Endothelial cell of umbilical vein (primary cell): ENCODE measurements at regions of chrX and their contacts with region 1.

Region 1: GRCh38 chrX:103918581-103919269 is 43.7 kb upstream of the TMSB15B start:
- DNase-seq: peak; percentile 76
- H3K4me3 ChIP-seq: peak overlapping the region; percentile 21 to 64 (median 40)
- H3K27ac ChIP-seq: peak overlapping the region; percentile 13
- H3K4me1 ChIP-seq: no peaks in the 10 kb centered on the region
- H3K27me3 ChIP-seq: no peaks in the 10 kb centered on the region
- CTCF ChIP-seq: no peak
- POLR2A ChIP-seq: no peak

Region 2: GRCh38 chrX:103453655-103454054 is 465.1 kb before region 1 on chrX:
- CTCF ChIA-PET with region 1: no interaction called
- POLR2A ChIA-PET with region 1: no interaction called
- dilution Hi-C with region 1: no loop called
- intact Hi-C with region 1: no loop called
- DNase-seq: peak; percentile 93
- H3K4me3 ChIP-seq: no peak overlapping the region
- H3K27ac ChIP-seq: peak overlapping the region; percentile 96
- H3K4me1 ChIP-seq: peaks cover 16% of the 10 kb centered on the region
- H3K27me3 ChIP-seq: no peaks in the 10 kb centered on the region
- CTCF ChIP-seq: no peak
- POLR2A ChIP-seq: no peak

Region 3: GRCh38 chrX:103941201-103941975 is 22.7 kb after region 1 on chrX:
- CTCF ChIA-PET with region 1: interaction called, 6 read pairs
- POLR2A ChIA-PET with region 1: no interaction called
- dilution Hi-C with region 1: no loop called
- intact Hi-C with region 1: loop called (anchors 1 kb)
- DNase-seq: peak; percentile 37
- H3K4me3 ChIP-seq: no peak overlapping the region
- H3K27ac ChIP-seq: no peak overlapping the region
- H3K4me1 ChIP-seq: no peaks in the 10 kb centered on the region
- H3K27me3 ChIP-seq: no peaks in the 10 kb centered on the region
- CTCF ChIP-seq: peak; percentile 10 to 32
- POLR2A ChIP-seq: no peak

Region 4: GRCh38 chrX:104136241-104137019 is 217.7 kb after region 1 on chrX:
- CTCF ChIA-PET with region 1: no interaction called
- POLR2A ChIA-PET with region 1: no interaction called
- dilution Hi-C with region 1: no loop called
- intact Hi-C with region 1: loop called (anchors 1 kb)
- DNase-seq: peak; percentile 73
- H3K4me3 ChIP-seq: peak overlapping the region in 2 of 3 experiments; percentile 16 to 19
- H3K27ac ChIP-seq: no peak overlapping the region
- H3K4me1 ChIP-seq: no peaks in the 10 kb centered on the region
- H3K27me3 ChIP-seq: no peaks in the 10 kb centered on the region
- CTCF ChIP-seq: peak; percentile 54 to 55
- POLR2A ChIP-seq: no peak

Region 5: DNA sequence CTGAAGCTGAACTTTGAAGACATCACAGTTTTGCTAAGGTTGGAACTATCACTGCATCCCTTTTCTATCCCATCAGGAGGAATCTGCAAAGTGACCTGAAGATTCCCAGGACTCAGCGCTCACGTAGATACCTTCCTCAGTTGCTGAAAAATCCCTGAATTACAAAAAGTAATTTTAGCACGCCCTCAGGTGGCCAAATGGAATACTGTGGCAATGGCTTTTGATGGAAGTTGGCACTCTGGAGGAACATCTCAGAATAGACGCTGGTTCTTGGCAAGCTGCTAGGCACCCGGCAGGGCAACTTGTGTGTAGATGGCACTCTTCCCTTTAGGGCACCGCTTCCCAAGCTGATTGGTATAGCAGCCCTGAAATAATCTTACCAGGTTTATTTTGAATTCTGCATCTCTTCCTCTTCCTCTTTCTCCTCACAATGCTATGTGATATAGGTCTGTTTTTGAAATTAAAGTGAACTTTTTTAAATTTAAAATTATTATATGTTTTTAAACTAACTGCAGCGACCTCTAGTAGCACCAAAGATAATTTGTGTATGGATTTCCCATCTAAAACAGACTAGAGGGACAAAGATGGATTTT is 352.3 kb after region 1 on chrX:
- CTCF ChIA-PET with region 1: no interaction called
- POLR2A ChIA-PET with region 1: no interaction called
- dilution Hi-C with region 1: no loop called
- intact Hi-C with region 1: loop called (anchors 1 kb)
- DNase-seq: peak; percentile 62
- H3K4me3 ChIP-seq: peak overlapping the region in 1 of 3 experiments; percentile 40
- H3K27ac ChIP-seq: no peak overlapping the region
- H3K4me1 ChIP-seq: peaks cover 2% of the 10 kb centered on the region
- H3K27me3 ChIP-seq: peaks cover 0 to 7% of the 10 kb centered on the region in 2 experiments
- CTCF ChIP-seq: peak; percentile 49 to 55
- POLR2A ChIP-seq: no peak

Region 6: GRCh38 chrX:104842326-104843045 is 923.8 kb after region 1 on chrX:
- CTCF ChIA-PET with region 1: no interaction called
- POLR2A ChIA-PET with region 1: no interaction called
- dilution Hi-C with region 1: no loop called
- intact Hi-C with region 1: no loop called
- DNase-seq: no peak
- H3K4me3 ChIP-seq: no peak overlapping the region
- H3K27ac ChIP-seq: no peak overlapping the region
- H3K4me1 ChIP-seq: no peaks in the 10 kb centered on the region
- H3K27me3 ChIP-seq: no peaks in the 10 kb centered on the region
- CTCF ChIP-seq: no peak
- POLR2A ChIP-seq: no peak